Endothelial cell of umbilical vein (primary cell): ENCODE measurements at regions of chr12 and their contacts with region 1.

Region 1: GRCh38 chr12:45268672-45269411 is 52.9 kb downstream of the ANO6 start:
- DNase-seq: peak; percentile 99
- H3K4me3 ChIP-seq: peak overlapping the region in 1 of 3 experiments; percentile 41
- H3K27ac ChIP-seq: peak overlapping the region; percentile 93
- H3K4me1 ChIP-seq: peaks cover 44% of the 10 kb centered on the region
- H3K27me3 ChIP-seq: no peaks in the 10 kb centered on the region
- CTCF ChIP-seq: peak; percentile 41 to 63
- POLR2A ChIP-seq: peak; percentile 36

Region 2: GRCh38 chr12:45183246-45183645 is 85.6 kb before region 1 on chr12:
- CTCF ChIA-PET with region 1: interaction called, 12 read pairs
- POLR2A ChIA-PET with region 1: no interaction called
- dilution Hi-C with region 1: no loop called
- intact Hi-C with region 1: no loop called
- DNase-seq: peak; percentile 51
- H3K4me3 ChIP-seq: no peak overlapping the region
- H3K27ac ChIP-seq: no peak overlapping the region
- H3K4me1 ChIP-seq: no peaks in the 10 kb centered on the region
- H3K27me3 ChIP-seq: no peaks in the 10 kb centered on the region
- CTCF ChIP-seq: peak in 1 of 2 donors; percentile 28
- POLR2A ChIP-seq: no peak

Region 3: GRCh38 chr12:45215419-45216229 is 53.2 kb before region 1 on chr12 and contains the start of gene ANO6:
- CTCF ChIA-PET with region 1: interaction called, 41 read pairs
- POLR2A ChIA-PET with region 1: interaction called, 7 read pairs
- dilution Hi-C with region 1: no loop called
- intact Hi-C with region 1: loop called (anchors 1 kb)
- DNase-seq: peak; percentile 93
- H3K4me3 ChIP-seq: peak within 1 kb of the TSS; percentile 53 to 88 (median 86)
- H3K27ac ChIP-seq: peak within 1 kb of the TSS; percentile 76
- H3K4me1 ChIP-seq: peaks cover 14% of the 10 kb centered on the region
- H3K27me3 ChIP-seq: no peaks in the 10 kb centered on the region
- CTCF ChIP-seq: peak in 1 of 2 donors; percentile 38
- POLR2A ChIP-seq: peak; percentile 61
- total RNA-seq, gene ANO6: 67.6 and 70.1 TPM in 2 replicates

Region 4: GRCh38 chr12:45354399-45354798 is 85.6 kb after region 1 on chr12:
- CTCF ChIA-PET with region 1: interaction called, 12 read pairs
- POLR2A ChIA-PET with region 1: no interaction called
- dilution Hi-C with region 1: no loop called
- intact Hi-C with region 1: no loop called
- DNase-seq: no peak
- H3K4me3 ChIP-seq: no peak overlapping the region
- H3K27ac ChIP-seq: no peak overlapping the region
- H3K4me1 ChIP-seq: peaks cover 19% of the 10 kb centered on the region
- H3K27me3 ChIP-seq: no peaks in the 10 kb centered on the region
- CTCF ChIP-seq: no peak
- POLR2A ChIP-seq: no peak

Region 5: GRCh38 chr12:45388545-45388944 is 119.7 kb after region 1 on chr12:
- CTCF ChIA-PET with region 1: interaction called, 69 read pairs
- POLR2A ChIA-PET with region 1: no interaction called
- dilution Hi-C with region 1: no loop called
- intact Hi-C with region 1: loop called (anchors 1 kb)
- DNase-seq: peak; percentile 58
- H3K4me3 ChIP-seq: no peak overlapping the region
- H3K27ac ChIP-seq: no peak overlapping the region
- H3K4me1 ChIP-seq: no peaks in the 10 kb centered on the region
- H3K27me3 ChIP-seq: no peaks in the 10 kb centered on the region
- CTCF ChIP-seq: peak; percentile 48 to 53
- POLR2A ChIP-seq: no peak

Region 6: GRCh38 chr12:45728630-45729232 is 459.9 kb after region 1 on chr12:
- CTCF ChIA-PET with region 1: interaction called, 19 read pairs
- POLR2A ChIA-PET with region 1: no interaction called
- dilution Hi-C with region 1: no loop called
- intact Hi-C with region 1: loop called (anchors 2 kb)
- DNase-seq: peak; percentile 97
- H3K4me3 ChIP-seq: peak overlapping the region; percentile 28 to 71 (median 60)
- H3K27ac ChIP-seq: peak overlapping the region; percentile 87
- H3K4me1 ChIP-seq: peaks cover 32% of the 10 kb centered on the region
- H3K27me3 ChIP-seq: no peaks in the 10 kb centered on the region
- CTCF ChIP-seq: peak; percentile 93 to 96
- POLR2A ChIP-seq: peak; percentile 84